Gastrocnemius medialis (tissue), 4 donors: ENCODE measurements at regions of chr1 and their contacts with region 1.

Region 1: DNA sequence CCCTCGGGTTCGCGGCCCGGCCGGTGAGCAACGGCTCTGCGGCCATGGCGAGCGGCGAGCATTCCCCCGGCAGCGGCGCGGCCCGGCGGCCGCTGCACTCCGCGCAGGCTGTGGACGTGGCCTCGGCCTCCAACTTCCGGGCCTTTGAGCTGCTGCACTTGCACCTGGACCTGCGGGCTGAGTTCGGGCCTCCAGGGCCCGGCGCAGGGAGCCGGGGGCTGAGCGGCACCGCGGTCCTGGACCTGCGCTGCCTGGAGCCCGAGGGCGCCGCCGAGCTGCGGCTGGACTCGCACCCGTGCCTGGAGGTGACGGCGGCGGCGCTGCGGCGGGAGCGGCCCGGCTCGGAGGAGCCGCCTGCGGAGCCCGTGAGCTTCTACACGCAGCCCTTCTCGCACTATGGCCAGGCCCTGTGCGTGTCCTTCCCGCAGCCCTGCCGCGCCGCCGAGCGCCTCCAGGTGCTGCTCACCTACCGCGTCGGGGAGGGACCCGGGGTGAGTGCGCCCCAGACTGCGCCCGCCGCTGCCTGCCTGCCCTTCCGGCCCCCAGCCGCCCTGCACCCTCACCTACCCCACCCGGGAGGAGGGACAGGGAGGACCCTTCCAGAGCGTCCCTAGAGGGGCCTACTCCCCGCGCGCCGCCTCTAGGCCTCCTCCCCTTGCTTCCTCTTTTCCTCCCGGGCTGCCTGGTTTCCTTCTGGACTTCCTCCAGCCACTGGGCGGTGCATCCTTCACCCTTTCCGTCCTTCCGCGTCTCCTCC is at the start of gene RNPEP:
- DNase-seq: peak; percentile 40 to 69
- ATAC-seq: peak; percentile 83
- H3K4me3 ChIP-seq: peak within 1 kb of the TSS; percentile 78 to 95 (median 86)
- H3K27ac ChIP-seq: peak within 1 kb of the TSS; percentile 75 to 90 (median 82)
- H3K4me1 ChIP-seq: peaks cover 5 to 11% of the 10 kb centered on the region in 2 donors
- H3K27me3 ChIP-seq: no peaks in the 10 kb centered on the region
- CTCF ChIP-seq: peak in 1 of 5 experiments; percentile 22
- POLR2A ChIP-seq: peak; percentile 68 to 71
- total RNA-seq, gene RNPEP: 11.1 to 24.9 (median 21.2) TPM

Region 2: DNA sequence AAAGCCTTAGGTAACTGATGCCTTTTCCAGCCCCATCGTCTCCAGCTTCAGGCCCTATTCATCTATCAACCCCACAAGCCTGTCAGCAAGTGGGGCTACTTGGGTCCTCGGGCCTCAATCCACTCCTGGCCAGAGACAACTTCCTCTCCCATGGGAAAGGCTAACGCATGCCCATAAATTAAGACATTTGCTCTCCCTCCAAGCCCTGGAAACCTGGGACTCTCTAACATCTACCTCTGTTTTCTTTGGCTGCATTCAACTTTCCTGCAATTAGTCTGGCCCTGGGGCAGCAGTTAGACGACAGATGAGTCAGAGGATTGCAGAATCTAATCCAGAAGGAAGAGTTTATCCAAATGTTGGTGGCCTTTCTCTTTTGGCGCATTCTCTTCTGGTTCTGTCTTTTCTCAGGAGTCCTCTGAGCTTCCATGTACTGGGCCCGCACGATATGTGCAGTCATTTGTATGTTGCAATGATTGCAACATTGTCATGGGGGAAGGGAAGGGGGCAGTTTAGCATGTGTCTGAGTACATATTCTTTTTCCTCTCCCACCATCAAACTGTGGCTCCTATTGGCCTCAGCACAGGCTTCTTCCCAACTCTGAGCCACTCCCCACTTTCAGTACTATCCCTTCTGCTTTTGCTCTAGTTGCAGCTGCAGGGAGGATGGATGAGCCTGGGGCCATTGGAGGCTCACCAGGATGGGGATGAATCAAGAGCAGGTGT is 389.4 kb before region 1 on chr1:
- in situ Hi-C with region 1: no loop called
- intact Hi-C with region 1: no loop called
- DNase-seq: peak; percentile 35 to 76
- ATAC-seq: peak; percentile 81 to 87
- H3K4me3 ChIP-seq: no peak overlapping the region
- H3K27ac ChIP-seq: peak overlapping the region in 2 of 4 donors; percentile 43 to 49
- H3K4me1 ChIP-seq: peaks cover 7 to 10% of the 10 kb centered on the region in 2 donors
- H3K27me3 ChIP-seq: no peaks in the 10 kb centered on the region
- CTCF ChIP-seq: no peak
- POLR2A ChIP-seq: no peak

Region 3: DNA sequence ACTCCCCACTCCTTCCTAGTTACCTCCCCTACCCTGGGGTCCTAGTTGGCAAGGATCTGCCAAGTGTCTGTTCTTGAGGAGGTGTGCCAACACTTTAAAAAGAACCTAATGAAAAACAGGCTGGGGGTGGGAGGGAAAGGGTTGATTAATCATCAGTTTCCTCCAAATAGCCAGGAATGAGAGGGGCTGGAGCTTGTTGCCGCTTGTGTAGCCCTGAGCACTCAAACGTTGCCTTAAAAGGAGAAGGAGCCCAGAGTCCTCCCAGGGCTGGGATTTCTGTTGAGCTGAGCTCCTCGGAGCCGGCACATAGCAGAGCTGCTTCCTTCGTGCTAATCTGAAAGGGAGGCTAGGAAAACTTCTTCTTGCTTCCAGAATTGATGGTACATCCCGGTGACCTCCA is 78.2 kb before region 1 on chr1:
- in situ Hi-C with region 1: no loop called
- intact Hi-C with region 1: no loop called
- DNase-seq: no peak
- ATAC-seq: peak; percentile 30 to 49
- H3K4me3 ChIP-seq: no peak overlapping the region
- H3K27ac ChIP-seq: peak overlapping the region; percentile 51 to 75 (median 72)
- H3K4me1 ChIP-seq: peaks cover 24 to 41% of the 10 kb centered on the region in 2 donors
- H3K27me3 ChIP-seq: no peaks in the 10 kb centered on the region
- CTCF ChIP-seq: no peak
- POLR2A ChIP-seq: no peak

Region 4: GRCh38 chr1:201925981-201926645 is 56.7 kb before region 1 on chr1:
- in situ Hi-C with region 1: no loop called
- intact Hi-C with region 1: no loop called
- DNase-seq: no peak
- ATAC-seq: no peak
- H3K4me3 ChIP-seq: no peak overlapping the region
- H3K27ac ChIP-seq: peak overlapping the region; percentile 48 to 58 (median 53)
- H3K4me1 ChIP-seq: peaks cover 6 to 14% of the 10 kb centered on the region in 2 donors
- H3K27me3 ChIP-seq: no peaks in the 10 kb centered on the region
- CTCF ChIP-seq: no peak
- POLR2A ChIP-seq: no peak

Region 5: GRCh38 chr1:201955009-201955728 is 27.6 kb before region 1 on chr1 and contains the start of gene TIMM17A:
- in situ Hi-C with region 1: no loop called
- intact Hi-C with region 1: loop called (anchors 2 kb)
- DNase-seq: peak; percentile 96 to 97
- ATAC-seq: peak; percentile 99 to 100
- H3K4me3 ChIP-seq: peak within 1 kb of the TSS; percentile 81 to 93 (median 86)
- H3K27ac ChIP-seq: peak within 1 kb of the TSS; percentile 84 to 91 (median 87)
- H3K4me1 ChIP-seq: peaks cover 9 to 17% of the 10 kb centered on the region in 2 donors
- H3K27me3 ChIP-seq: no peaks in the 10 kb centered on the region
- CTCF ChIP-seq: no peak
- POLR2A ChIP-seq: peak; percentile 86 to 93
- total RNA-seq, gene TIMM17A: 33.6 to 67.6 (median 43.3) TPM

Region 6: GRCh38 chr1:202656951-202657646 is 674.3 kb after region 1 on chr1:
- in situ Hi-C with region 1: no loop called
- intact Hi-C with region 1: no loop called
- DNase-seq: no peak
- ATAC-seq: no peak
- H3K4me3 ChIP-seq: no peak overlapping the region
- H3K27ac ChIP-seq: no peak overlapping the region
- H3K4me1 ChIP-seq: no peaks in the 10 kb centered on the region
- H3K27me3 ChIP-seq: peaks cover 2 to 16% (median 7%) of the 10 kb centered on the region in 3 donors
- CTCF ChIP-seq: no peak
- POLR2A ChIP-seq: no peak